IMR-90 (cell line): ENCODE measurements at regions of chr13 and their contacts with region 1.

Region 1: DNA sequence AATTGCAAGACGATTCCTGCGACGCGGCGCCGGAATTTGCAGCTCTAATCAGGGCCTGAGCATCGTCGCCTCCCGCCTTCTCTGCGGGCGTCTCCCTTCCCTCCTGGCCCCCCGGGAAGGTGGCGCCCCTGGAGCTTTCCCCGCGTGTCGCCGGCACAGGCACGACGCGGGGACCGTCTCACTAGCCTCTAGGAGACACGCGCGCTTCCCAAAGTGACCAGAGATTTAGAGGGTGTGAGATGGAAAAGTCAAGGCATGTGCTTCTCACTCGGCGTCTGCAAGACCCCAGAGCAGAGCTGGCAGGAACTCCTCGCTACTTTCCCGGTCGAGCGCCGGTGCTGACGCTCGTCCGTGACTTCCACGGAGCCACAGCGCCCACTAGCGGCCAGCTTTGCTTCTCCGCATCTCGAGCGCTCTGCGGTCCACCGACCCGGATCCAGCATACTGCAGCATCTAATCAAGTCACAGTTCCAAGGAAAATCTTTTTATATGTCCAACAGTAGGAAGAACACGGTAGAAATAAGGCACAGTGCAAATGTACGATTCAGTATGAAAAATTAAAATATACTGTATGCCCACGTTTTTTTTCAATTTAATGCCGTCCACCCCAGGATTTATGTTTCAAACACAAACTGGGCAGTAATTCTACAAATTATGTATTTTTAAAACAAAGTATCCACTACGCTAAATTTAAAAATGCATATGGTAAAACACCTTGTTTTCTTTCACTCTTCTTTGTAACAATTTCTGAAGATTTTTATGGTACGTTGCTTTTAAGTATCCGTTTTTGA is 977 bp upstream of the EFNB2 start:
- DNase-seq: peak; percentile 83
- ATAC-seq: peak; percentile 22
- H3K4me3 ChIP-seq: peak overlapping the region; percentile 47
- H3K27ac ChIP-seq: no peak overlapping the region
- H3K4me1 ChIP-seq: peaks cover 4% of the 10 kb centered on the region; the same call in 1 of the 2 replicates
- H3K27me3 ChIP-seq: no peaks in the 10 kb centered on the region
- CTCF ChIP-seq: peak; percentile 96
- POLR2A ChIP-seq: no peak
- RAD21 ChIP-seq: peak; percentile 93

Region 2: GRCh38 chr13:104773775-104774174 is 1762.7 kb before region 1 on chr13:
- CTCF ChIA-PET with region 1: interaction called, 4 read pairs
- POLR2A ChIA-PET with region 1: no interaction called
- dilution Hi-C with region 1: no loop called
- in situ Hi-C with region 1: loop called (anchors 10 kb)
- intact Hi-C with region 1: loop called (anchors 2 kb)
- DNase-seq: peak; percentile 54
- ATAC-seq: peak; percentile 80; the same call in 1 of the 2 replicates
- H3K4me3 ChIP-seq: no peak overlapping the region
- H3K27ac ChIP-seq: no peak overlapping the region
- H3K4me1 ChIP-seq: no peaks in the 10 kb centered on the region
- H3K27me3 ChIP-seq: no peaks in the 10 kb centered on the region
- CTCF ChIP-seq: peak; percentile 63
- POLR2A ChIP-seq: no peak
- RAD21 ChIP-seq: peak; percentile 64

Region 3: DNA sequence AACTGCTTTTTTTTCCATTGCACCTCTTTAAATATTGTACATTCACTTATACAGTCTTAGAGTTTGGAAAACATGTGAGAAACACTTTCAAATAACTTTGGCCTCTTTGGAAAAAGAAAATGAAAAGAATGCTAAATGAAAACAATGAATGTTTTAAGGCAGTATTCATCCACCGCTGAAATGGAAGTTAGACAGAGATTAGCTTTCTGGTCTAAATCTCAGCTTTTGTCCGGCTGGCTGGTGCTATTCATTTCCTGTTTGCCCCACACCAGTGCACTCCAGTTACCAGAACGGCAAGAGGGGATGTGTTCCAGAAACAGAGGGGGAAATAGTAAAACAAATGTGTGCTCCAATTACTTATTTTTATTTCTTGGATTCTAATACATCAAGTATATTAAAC is 1202.2 kb before region 1 on chr13:
- CTCF ChIA-PET with region 1: no interaction called
- POLR2A ChIA-PET with region 1: no interaction called
- dilution Hi-C with region 1: no loop called
- in situ Hi-C with region 1: loop called (anchors 25 kb)
- intact Hi-C with region 1: loop called (anchors 5 kb)
- DNase-seq: peak; percentile 79
- ATAC-seq: peak; percentile 86
- H3K4me3 ChIP-seq: no peak overlapping the region
- H3K27ac ChIP-seq: peak overlapping the region; percentile 45; the same call in 1 of the 2 replicates
- H3K4me1 ChIP-seq: peaks cover 18% of the 10 kb centered on the region
- H3K27me3 ChIP-seq: no peaks in the 10 kb centered on the region
- CTCF ChIP-seq: no peak
- POLR2A ChIP-seq: no peak
- RAD21 ChIP-seq: no peak

Region 4: DNA sequence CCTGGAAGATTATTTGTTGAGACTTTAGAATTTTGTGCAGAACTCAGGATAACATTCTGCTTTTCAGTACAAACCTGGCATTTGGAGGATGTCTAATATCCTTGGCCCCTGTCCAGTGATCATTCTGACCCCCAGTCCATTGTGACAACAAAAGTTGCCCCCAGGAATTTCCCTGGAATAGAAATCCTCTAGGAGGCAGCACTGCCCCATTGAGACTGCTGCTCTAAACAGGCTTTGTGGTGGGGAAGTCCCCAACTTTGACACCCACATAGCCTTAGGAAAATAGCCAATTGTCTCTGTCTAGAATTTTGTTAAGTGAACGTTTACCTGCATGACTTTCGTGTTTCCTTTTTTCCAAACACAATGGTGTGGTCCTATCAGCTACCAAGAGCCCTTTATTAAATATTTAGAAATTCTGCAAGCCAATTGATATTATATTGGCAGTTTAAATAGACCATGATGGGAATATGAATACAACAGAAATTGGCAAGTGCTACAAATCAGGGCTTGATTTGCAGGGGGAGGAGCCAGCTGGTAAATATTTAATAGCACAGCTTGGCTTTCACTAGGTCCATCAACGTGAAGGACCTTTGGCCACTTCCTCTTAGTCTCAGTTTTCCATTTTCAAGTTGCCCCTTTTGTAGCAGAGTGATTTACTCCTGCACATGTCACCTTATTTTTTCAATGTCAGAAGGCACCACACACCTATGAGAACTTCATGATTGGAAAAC is 452.7 kb before region 1 on chr13:
- CTCF ChIA-PET with region 1: interaction called, 3 read pairs
- POLR2A ChIA-PET with region 1: no interaction called
- dilution Hi-C with region 1: no loop called
- in situ Hi-C with region 1: no loop called
- intact Hi-C with region 1: loop called (anchors 1 kb)
- DNase-seq: peak; percentile 54
- ATAC-seq: peak; percentile 64
- H3K4me3 ChIP-seq: no peak overlapping the region
- H3K27ac ChIP-seq: no peak overlapping the region
- H3K4me1 ChIP-seq: no peaks in the 10 kb centered on the region
- H3K27me3 ChIP-seq: no peaks in the 10 kb centered on the region
- CTCF ChIP-seq: peak; percentile 74
- POLR2A ChIP-seq: no peak
- RAD21 ChIP-seq: peak; percentile 88

Region 5: DNA sequence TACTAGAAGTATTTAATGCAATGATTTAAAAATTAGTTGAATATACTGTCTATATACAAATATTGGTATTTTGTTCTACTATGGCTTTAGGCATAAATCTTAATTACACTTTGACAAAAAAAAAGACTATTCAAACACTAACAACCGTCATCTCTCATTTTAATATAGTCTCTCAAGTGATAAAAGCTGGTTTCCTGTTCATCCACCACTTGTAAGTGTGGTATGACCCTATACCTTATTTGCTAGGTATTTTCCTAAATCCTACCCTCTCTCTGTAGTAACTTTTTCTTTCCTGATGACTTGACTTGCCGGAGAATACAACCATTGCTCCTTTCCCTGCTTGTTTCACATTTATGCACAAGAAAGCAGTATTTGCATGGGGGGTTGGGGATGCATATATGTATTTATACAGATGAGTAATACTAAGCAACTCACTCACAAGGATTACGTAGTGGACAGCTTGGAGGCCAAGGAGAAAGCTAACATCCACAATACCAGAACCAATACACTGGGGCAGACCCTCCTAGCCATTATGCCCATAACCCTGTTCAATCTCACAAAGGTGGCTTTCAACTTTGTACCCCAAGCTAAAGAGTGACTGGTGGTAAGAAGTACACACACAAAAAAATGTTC is 11.7 kb after region 1 on chr13:
- CTCF ChIA-PET with region 1: no interaction called
- POLR2A ChIA-PET with region 1: no interaction called
- dilution Hi-C with region 1: no loop called
- in situ Hi-C with region 1: no loop called
- intact Hi-C with region 1: no loop called
- DNase-seq: peak; percentile 78
- ATAC-seq: peak; percentile 93
- H3K4me3 ChIP-seq: no peak overlapping the region
- H3K27ac ChIP-seq: no peak overlapping the region
- H3K4me1 ChIP-seq: peaks cover 6% of the 10 kb centered on the region
- H3K27me3 ChIP-seq: no peaks in the 10 kb centered on the region
- CTCF ChIP-seq: no peak
- POLR2A ChIP-seq: no peak
- RAD21 ChIP-seq: no peak

Region 6: GRCh38 chr13:106619688-106620555 is 83.5 kb after region 1 on chr13:
- CTCF ChIA-PET with region 1: interaction called, 3 read pairs
- POLR2A ChIA-PET with region 1: no interaction called
- dilution Hi-C with region 1: no loop called
- in situ Hi-C with region 1: no loop called
- intact Hi-C with region 1: loop called (anchors 1 kb)
- DNase-seq: peak; percentile 69
- ATAC-seq: peak; percentile 98
- H3K4me3 ChIP-seq: no peak overlapping the region
- H3K27ac ChIP-seq: no peak overlapping the region
- H3K4me1 ChIP-seq: no peaks in the 10 kb centered on the region
- H3K27me3 ChIP-seq: peaks cover 21% of the 10 kb centered on the region
- CTCF ChIP-seq: peak; percentile 82
- POLR2A ChIP-seq: no peak
- RAD21 ChIP-seq: peak; percentile 75